ENCODE measurements at regions of chr10 and their contacts with region 1.

Region 1: DNA sequence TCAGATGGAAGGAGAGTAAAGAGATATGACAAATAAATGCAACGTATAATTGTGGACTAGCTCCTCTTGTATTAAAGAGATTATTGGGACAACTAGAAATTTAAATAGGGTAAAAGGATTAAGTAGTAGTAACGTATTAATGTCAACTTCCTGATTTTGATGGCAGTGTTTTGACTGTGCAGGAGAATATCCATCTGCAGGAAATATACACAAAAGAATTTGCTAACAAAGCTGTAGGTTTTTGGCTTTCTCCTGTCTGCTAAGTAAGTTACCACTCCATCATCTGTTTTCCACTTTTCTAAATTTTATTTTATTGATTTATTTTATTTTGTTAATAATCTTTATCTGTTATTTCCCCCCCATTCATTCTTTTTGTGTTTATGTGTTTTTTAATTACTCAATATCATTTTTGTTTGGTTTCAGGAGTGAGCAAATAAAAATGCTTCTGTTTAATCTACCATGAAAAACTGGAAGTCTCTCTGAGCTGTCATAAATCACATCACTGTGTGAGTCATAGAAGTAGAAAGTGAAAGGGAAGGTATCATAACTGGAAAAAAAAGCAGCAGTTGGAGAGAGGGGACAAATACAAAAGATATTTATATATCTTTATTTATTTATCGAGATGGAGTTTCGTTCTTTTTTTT is 28.0 kb upstream of the BEND7 start:
- DNase-seq: no peak
- ATAC-seq: no peak
- H3K4me3 ChIP-seq: no peak overlapping the region
- H3K4me3 Mint-ChIP-seq: no peak overlapping the region
- H3K27ac ChIP-seq: no peak overlapping the region
- H3K27ac Mint-ChIP-seq: no peak overlapping the region
- H3K4me1 ChIP-seq: no peaks in the 10 kb centered on the region
- H3K4me1 Mint-ChIP-seq: peaks cover 0 to 2% (median 0%) of the 10 kb centered on the region in 3 donors
- H3K27me3 ChIP-seq: no peaks in the 10 kb centered on the region
- H3K27me3 Mint-ChIP-seq: peaks cover 9 to 12% of the 10 kb centered on the region in 2 donors

Region 2: GRCh38 chr10:13589316-13589715 is 32.5 kb after region 1 on chr10:
- CTCF ChIA-PET with region 1: no interaction called
- POLR2A ChIA-PET with region 1: interaction called in 1 of 2 experiments, 11 read pairs
- DNase-seq: no peak
- ATAC-seq: no peak
- H3K4me3 ChIP-seq: no peak overlapping the region
- H3K4me3 Mint-ChIP-seq: peak overlapping the region in 2 of 3 donors; percentile 99 to 100
- H3K27ac ChIP-seq: no peak overlapping the region
- H3K27ac Mint-ChIP-seq: no peak overlapping the region
- H3K4me1 ChIP-seq: peaks cover 11 to 16% of the 10 kb centered on the region in 2 experiments
- H3K4me1 Mint-ChIP-seq: peaks cover 53 to 62% (median 59%) of the 10 kb centered on the region in 3 donors
- H3K27me3 ChIP-seq: peaks cover 3% of the 10 kb centered on the region in 2 experiments
- H3K27me3 Mint-ChIP-seq: peaks cover 5% of the 10 kb centered on the region in 2 donors

Region 3: GRCh38 chr10:14889318-14889717 is 1332.5 kb after region 1 on chr10:
- CTCF ChIA-PET with region 1: no interaction called
- POLR2A ChIA-PET with region 1: no interaction called
- DNase-seq: peak in 1 of 35 experiments; percentile 36
- ATAC-seq: no peak
- H3K4me3 ChIP-seq: no peak overlapping the region
- H3K4me3 Mint-ChIP-seq: no peak overlapping the region
- H3K27ac ChIP-seq: no peak overlapping the region
- H3K27ac Mint-ChIP-seq: peak overlapping the region in 1 of 2 donors; percentile 23
- H3K4me1 ChIP-seq: peaks cover 0 to 3% of the 10 kb centered on the region in 2 experiments
- H3K4me1 Mint-ChIP-seq: peaks cover 5 to 11% (median 5%) of the 10 kb centered on the region in 3 donors
- H3K27me3 ChIP-seq: no peaks in the 10 kb centered on the region
- H3K27me3 Mint-ChIP-seq: no peaks in the 10 kb centered on the region

Measured in T-cell (primary cell).